Dorsolateral prefrontal cortex (tissue), 120 donors: ENCODE measurements at regions of chr9 and their contacts with region 1.

Region 1: GRCh38 chr9:133726401-133727276 is 11.5 kb downstream of the SARDH start:
- DNase-seq: peak in 9 of 10 donors; percentile 36 to 82 (median 67)
- H3K4me3 ChIP-seq: no peak overlapping the region
- H3K27ac ChIP-seq: peak overlapping the region in 1 of 59 donors; percentile 66
- H3K27me3 ChIP-seq: peaks cover 0 to 9% (median 0%) of the 10 kb centered on the region in 45 donors
- CTCF ChIP-seq: peak; percentile 28 to 77 (median 56)

Region 2: GRCh38 chr9:133406480-133407307 is 319.9 kb before region 1 on chr9:
- intact Hi-C with region 1: loop called in 1 of 2 experiments (anchors 10 kb)
- DNase-seq: peak; percentile 67 to 89 (median 82)
- H3K4me3 ChIP-seq: no peak overlapping the region
- H3K27ac ChIP-seq: peak overlapping the region in 16 of 59 donors; percentile 7 to 65 (median 28)
- H3K27me3 ChIP-seq: no peaks in the 10 kb centered on the region
- CTCF ChIP-seq: peak; percentile 66 to 97 (median 92)

Region 3: DNA sequence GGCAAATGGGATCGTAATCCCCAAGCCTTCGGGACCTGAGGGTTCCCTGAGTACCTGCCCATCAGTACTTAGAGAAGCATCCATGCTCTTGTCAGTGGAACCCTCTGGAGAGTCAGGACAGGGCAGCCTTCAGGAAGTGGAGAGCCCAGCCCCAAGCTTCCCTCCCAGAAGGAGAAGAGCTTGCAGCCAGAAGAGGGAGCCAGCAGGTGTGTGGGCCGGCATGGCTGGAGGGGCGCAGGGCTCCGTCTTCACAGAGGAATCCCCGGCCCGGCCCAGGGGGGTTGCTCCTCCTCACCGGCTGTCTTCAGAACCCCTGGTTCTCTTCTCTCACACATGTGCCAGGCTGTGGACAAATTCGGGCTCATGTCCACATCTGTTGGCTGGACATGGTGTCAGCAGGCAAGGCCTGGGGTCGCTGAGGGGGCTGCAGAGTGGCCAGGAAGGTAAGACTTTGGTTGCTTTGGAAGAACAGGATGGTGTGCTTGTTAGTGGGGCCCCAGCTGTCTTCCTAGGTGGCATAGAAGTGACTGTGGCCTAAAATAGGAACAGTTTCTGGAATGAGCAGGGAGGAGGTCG is 540.8 kb after region 1 on chr9:
- intact Hi-C with region 1: no loop called
- DNase-seq: no peak
- H3K4me3 ChIP-seq: no peak overlapping the region
- H3K27ac ChIP-seq: no peak overlapping the region
- H3K27me3 ChIP-seq: no peaks in the 10 kb centered on the region
- CTCF ChIP-seq: peak in 1 of 56 donors; percentile 20